ENCODE measurements at regions of chr12 and their contacts with region 1.

Region 1: DNA sequence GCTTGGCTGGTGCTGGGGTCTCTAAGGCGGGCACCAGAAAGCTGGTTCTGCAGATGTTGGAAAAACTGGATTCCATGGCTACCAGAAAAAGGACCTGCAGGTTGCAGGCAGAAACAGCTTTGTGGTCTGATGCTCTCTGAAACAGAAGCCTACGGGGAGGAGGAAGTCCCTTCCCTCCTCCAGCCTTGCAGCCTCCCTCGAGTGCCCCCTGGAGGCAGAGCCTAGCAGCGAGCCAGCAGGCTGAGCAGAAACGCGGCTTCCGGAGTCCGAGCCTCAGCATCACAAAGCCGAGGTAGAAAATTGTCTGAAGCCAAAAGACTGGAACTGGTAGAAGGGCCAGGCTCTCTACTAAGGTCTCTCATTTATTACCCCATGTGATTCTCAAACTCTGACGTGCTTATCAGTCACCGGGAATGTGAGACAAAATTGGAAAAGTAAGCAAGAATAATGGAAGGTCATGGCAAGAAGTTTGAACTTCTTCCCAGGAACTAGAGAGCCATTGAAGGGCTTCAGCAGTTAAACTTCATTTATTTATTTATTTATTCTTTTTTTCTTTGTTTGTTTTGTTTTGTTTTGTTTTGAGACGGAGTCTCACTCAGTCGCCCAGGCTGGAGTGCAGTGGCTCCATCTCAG is 82.2 kb upstream of the CPSF6 start:
- DNase-seq: peak; percentile 48
- H3K4me3 ChIP-seq: no peak overlapping the region
- H3K27ac ChIP-seq: no peak overlapping the region
- H3K27me3 ChIP-seq: no peaks in the 10 kb centered on the region
- CTCF ChIP-seq: peak; percentile 99

Region 2: DNA sequence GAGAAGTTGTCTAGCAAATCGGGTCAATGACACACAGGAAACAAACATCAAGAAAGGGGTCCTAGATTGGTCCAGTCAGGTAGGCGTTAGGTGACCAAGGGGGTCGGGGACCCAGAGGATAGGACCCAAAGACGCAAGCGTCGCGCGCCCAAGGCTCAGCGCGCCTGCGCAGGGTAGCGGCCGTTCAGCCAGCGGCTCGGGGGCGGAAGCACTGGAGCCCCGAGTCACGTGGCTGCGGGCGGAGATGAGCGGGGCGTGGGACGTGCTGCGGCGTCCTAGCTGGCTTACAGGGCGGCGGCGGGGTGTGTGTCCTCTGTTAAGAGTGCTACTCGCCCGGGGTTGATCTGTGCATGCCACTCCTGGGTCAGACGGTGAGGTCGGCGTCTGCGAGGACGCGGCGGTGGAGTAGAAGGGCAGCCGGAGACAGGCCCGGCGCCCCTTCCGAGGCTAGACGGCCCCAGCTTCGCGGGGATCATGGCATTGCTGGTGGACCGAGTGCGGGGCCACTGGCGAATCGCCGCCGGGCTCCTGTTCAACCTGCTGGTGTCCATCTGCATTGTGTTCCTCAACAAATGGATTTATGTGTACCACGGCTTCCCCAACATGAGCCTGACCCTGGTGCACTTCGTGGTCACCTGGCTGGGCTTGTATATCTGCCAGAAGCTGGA is 411.1 kb before region 1 on chr12 and contains the start of gene SLC35E3:
- CTCF ChIA-PET with region 1: no interaction called
- POLR2A ChIA-PET with region 1: no interaction called
- DNase-seq: peak; percentile 37
- H3K4me3 ChIP-seq: peak within 1 kb of the TSS; percentile 81
- H3K27ac ChIP-seq: no peak within 1 kb of the TSS
- H3K27me3 ChIP-seq: no peaks in the 10 kb centered on the region
- CTCF ChIP-seq: no peak
- polyA plus RNA-seq, gene SLC35E3: 7.7 and 9.2 TPM in 2 replicates

Region 3: GRCh38 chr12:68798882-68799234 is 358.3 kb before region 1 on chr12:
- CTCF ChIA-PET with region 1: no interaction called
- POLR2A ChIA-PET with region 1: no interaction called
- DNase-seq: no peak
- H3K4me3 ChIP-seq: no peak overlapping the region
- H3K27ac ChIP-seq: no peak overlapping the region
- H3K27me3 ChIP-seq: no peaks in the 10 kb centered on the region
- CTCF ChIP-seq: no peak

Region 4: DNA sequence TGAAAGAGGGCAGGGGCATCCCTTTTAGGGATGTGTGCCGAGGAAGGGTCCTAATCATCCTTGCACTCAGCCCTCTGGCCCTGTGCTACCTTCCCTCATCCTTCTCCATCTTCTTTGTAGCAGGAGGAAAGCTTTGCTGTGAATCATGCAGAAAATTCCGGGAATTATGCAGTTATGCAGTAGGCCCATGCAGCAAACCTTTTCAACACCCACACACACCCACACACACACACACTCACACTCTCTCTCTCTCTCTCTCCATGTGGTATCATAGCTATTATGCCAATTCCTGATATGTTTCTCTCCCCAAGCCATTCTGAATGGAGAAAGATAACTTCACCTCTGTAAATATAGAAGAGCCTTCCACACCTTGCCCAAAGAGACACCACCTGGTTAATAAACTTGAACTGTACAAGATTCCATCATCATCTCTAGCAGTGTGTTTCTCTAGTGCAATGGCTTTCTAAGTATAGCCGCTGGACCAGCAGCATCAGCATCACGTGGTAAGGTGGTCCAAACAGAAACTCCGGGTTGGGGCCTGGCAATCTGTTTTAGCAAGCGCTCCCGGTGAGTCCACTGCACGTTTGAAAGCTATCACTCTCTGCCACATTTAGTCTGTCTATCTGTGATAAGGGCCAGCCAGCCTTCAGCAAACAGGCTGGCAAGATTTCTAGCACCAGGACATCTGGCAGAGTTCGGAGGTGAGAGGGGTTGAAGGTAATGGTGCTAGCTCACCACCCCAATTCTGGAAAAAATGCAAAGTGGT is 291.6 kb before region 1 on chr12:
- CTCF ChIA-PET with region 1: interaction called, 33 read pairs
- POLR2A ChIA-PET with region 1: no interaction called
- DNase-seq: no peak
- H3K4me3 ChIP-seq: no peak overlapping the region
- H3K27ac ChIP-seq: no peak overlapping the region
- H3K27me3 ChIP-seq: no peaks in the 10 kb centered on the region
- CTCF ChIP-seq: no peak

Region 5: DNA sequence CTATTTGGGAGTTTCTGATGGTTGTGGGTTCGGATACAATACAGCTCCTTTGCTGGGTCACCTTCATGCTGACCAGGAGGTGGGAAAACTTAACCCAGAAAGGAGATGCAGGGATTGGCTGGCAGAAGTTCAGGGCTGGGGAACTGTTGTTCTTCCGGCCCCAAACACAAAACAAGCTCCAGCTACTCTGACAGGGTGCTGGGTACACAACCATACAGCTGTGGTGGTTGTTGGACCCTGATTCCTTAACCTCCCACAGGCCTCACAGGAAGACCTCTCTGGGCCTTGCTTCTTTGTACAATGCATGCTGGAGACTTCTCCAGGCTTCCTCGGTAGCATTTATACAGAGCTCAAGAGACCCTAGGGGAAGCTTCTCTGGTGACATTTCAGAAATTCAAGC is 271.8 kb before region 1 on chr12:
- CTCF ChIA-PET with region 1: no interaction called
- POLR2A ChIA-PET with region 1: no interaction called
- DNase-seq: no peak
- H3K4me3 ChIP-seq: no peak overlapping the region
- H3K27ac ChIP-seq: no peak overlapping the region
- H3K27me3 ChIP-seq: no peaks in the 10 kb centered on the region
- CTCF ChIP-seq: no peak

Region 6: GRCh38 chr12:69070319-69071090 is 86.6 kb before region 1 on chr12:
- CTCF ChIA-PET with region 1: interaction called, 19 read pairs
- POLR2A ChIA-PET with region 1: no interaction called
- DNase-seq: peak; percentile 32
- H3K4me3 ChIP-seq: no peak overlapping the region
- H3K27ac ChIP-seq: no peak overlapping the region
- H3K27me3 ChIP-seq: no peaks in the 10 kb centered on the region
- CTCF ChIP-seq: peak; percentile 99

Region 7: GRCh38 chr12:69167648-69168165 is 10.6 kb after region 1 on chr12:
- CTCF ChIA-PET with region 1: interaction called, 15 read pairs
- POLR2A ChIA-PET with region 1: no interaction called
- DNase-seq: no peak
- H3K4me3 ChIP-seq: no peak overlapping the region
- H3K27ac ChIP-seq: no peak overlapping the region
- H3K27me3 ChIP-seq: peaks cover 10% of the 10 kb centered on the region
- CTCF ChIP-seq: no peak

Region 8: GRCh38 chr12:69189378-69189978 is 32.3 kb after region 1 on chr12:
- CTCF ChIA-PET with region 1: interaction called, 11 read pairs
- POLR2A ChIA-PET with region 1: no interaction called
- DNase-seq: no peak
- H3K4me3 ChIP-seq: no peak overlapping the region
- H3K27ac ChIP-seq: no peak overlapping the region
- H3K27me3 ChIP-seq: no peaks in the 10 kb centered on the region
- CTCF ChIP-seq: no peak

Region 9: DNA sequence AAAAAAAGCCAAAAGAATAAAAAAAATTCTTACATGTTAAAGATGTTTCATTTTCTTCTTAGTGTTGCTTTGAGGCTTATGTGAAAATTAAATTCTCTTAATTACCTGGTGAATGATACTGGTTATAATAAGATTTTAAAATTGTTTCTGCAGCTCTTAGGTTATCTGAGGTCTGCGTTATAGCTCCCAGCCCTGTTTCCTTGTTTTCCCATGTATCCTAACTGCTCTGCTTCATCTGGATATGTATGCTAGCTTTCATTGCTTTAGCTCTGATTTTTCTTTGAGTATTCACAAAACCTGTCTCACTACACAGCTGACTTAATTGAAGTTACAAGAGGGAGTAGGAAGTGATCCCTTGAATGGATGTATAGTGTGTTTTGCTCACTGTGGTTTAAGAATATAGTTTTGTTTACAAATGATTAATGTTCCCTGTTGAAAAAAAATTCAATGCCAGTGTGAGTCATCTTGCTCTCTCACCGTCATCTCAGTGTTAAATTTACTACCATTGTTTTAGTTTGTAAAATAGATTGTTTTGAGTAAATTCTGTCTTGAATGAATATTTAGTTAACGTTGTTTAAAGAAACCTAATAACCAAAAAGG is 109.0 kb after region 1 on chr12:
- CTCF ChIA-PET with region 1: interaction called, 11 read pairs
- POLR2A ChIA-PET with region 1: no interaction called
- DNase-seq: peak; percentile 34
- H3K4me3 ChIP-seq: no peak overlapping the region
- H3K27ac ChIP-seq: no peak overlapping the region
- H3K27me3 ChIP-seq: no peaks in the 10 kb centered on the region
- CTCF ChIP-seq: no peak